ENCODE measurements at regions of chr14 and their contacts with region 1.

Region 1: GRCh38 chr14:68301219-68301618 is 481.6 kb downstream of the RAD51B start:
- DNase-seq: no peak
- ATAC-seq: no peak
- H3K4me3 ChIP-seq: no peak overlapping the region
- H3K27ac ChIP-seq: no peak overlapping the region
- H3K4me1 ChIP-seq: no peaks in the 10 kb centered on the region
- H3K27me3 ChIP-seq: no peaks in the 10 kb centered on the region
- CTCF ChIP-seq: no peak

Region 2: GRCh38 chr14:68268197-68268596 is 33.0 kb before region 1 on chr14:
- CTCF ChIA-PET with region 1: no interaction called
- POLR2A ChIA-PET with region 1: no interaction called
- in situ Hi-C with region 1: no loop called
- intact Hi-C with region 1: no loop called
- DNase-seq: no peak
- ATAC-seq: no peak
- H3K4me3 ChIP-seq: no peak overlapping the region
- H3K27ac ChIP-seq: no peak overlapping the region; the same call in 1 of the 2 replicates
- H3K4me1 ChIP-seq: no peaks in the 10 kb centered on the region
- H3K27me3 ChIP-seq: no peaks in the 10 kb centered on the region
- CTCF ChIP-seq: no peak

Region 3: GRCh38 chr14:68312884-68313610 is 11.8 kb after region 1 on chr14:
- CTCF ChIA-PET with region 1: no interaction called
- POLR2A ChIA-PET with region 1: interaction called, 10 read pairs
- in situ Hi-C with region 1: no loop called
- intact Hi-C with region 1: no loop called
- DNase-seq: no peak
- ATAC-seq: no peak
- H3K4me3 ChIP-seq: no peak overlapping the region
- H3K27ac ChIP-seq: no peak overlapping the region
- H3K4me1 ChIP-seq: no peaks in the 10 kb centered on the region
- H3K27me3 ChIP-seq: no peaks in the 10 kb centered on the region
- CTCF ChIP-seq: no peak

Measured in Panc1 (cell line).